ENCODE measurements at regions of chr3 and their contacts with region 1.

Region 1: DNA sequence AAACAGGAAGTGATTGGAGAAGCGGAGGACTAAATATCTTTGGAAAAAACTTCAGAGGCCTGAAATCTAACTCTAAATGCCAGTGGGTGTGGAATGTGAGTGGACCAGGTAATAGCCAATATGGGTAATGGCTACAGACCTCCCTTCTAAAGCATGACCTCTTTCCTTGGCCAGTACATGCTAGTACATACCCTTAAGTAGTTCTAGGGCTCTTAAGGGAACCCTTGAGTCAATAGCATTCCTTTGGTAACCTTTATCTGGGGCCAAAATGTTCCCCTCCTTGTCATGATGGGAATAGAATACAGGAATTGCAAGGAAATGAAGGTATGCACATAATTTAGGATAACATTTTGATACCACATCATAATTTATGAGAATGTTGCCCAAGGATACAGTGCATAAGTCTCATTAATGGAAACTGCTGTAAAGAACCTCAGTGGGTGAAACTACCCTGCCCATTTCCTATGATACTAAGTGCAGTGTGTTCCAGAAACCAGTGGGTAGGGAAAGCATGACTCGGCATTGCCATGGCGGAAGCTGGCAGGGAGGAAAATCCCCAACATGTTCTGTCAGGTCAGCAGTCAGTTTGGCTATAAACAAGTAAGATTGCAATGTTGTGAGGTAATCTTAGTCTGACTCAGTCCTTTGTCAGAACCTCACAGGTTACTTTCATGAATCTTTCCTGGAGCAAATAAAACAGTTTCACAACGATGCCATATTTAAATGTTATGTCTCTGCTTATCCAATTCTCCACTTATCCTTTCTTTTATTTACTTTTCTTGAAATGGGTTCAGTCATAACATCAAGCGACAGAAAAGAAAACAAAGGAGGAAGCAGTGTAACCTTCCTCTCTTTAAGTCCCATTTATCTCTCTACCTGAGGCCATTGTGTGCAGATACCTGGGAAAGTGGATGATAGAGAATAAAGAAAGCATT is 23.5 kb upstream of the RAP2B start:
- DNase-seq: peak; percentile 88
- H3K4me3 Mint-ChIP-seq: no peak overlapping the region
- H3K27ac Mint-ChIP-seq: peak overlapping the region; percentile 71
- H3K4me1 Mint-ChIP-seq: peaks cover 24% of the 10 kb centered on the region
- H3K27me3 Mint-ChIP-seq: peaks cover 3% of the 10 kb centered on the region

Region 2: DNA sequence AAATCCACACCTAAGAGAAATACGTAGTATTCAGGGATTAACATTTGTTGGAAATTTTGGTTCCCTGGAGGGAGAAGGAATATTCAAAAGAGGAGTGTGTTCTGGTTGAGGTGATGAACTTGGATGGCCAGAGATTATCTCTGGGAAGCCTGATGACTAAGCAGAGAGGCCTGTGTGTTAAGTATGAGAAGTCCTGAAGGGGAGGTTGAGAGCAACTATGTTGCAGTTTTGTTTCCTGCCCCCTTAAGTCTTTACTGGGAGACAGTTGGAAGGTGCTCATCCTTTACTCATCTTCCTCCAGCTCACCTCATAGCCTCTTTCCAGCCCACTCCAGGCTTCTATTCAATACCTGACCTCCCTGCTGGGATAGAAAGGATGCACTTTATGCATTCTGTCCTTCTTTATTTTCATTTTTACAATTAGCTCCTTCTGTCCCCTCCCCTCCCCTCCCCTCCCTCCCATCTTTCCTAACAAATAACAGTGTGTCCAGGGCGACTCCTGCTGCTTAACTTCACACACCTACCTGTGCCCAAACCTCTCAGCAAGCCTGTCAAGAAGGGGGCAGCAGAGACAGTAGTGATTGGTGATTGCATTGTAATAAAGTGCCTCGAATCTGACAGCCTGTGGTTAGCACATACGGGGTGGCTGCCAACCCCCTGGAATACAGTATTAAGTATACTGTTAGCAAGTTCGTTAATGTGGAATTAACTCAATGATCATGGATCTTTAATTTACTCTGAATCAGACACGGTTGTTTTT is 35.4 kb after region 1 on chr3:
- CTCF ChIA-PET with region 1: no interaction called
- intact Hi-C with region 1: no loop called
- DNase-seq: no peak
- H3K4me3 Mint-ChIP-seq: no peak overlapping the region
- H3K27ac Mint-ChIP-seq: no peak overlapping the region
- H3K4me1 Mint-ChIP-seq: peaks cover 4% of the 10 kb centered on the region
- H3K27me3 Mint-ChIP-seq: no peaks in the 10 kb centered on the region

Region 3: GRCh38 chr3:153221748-153222162 is 83.2 kb after region 1 on chr3:
- CTCF ChIA-PET with region 1: no interaction called
- intact Hi-C with region 1: loop called (anchors 1 kb)
- DNase-seq: peak; percentile 73
- H3K4me3 Mint-ChIP-seq: peak overlapping the region; percentile 66
- H3K27ac Mint-ChIP-seq: peak overlapping the region; percentile 85
- H3K4me1 Mint-ChIP-seq: peaks cover 53% of the 10 kb centered on the region
- H3K27me3 Mint-ChIP-seq: no peaks in the 10 kb centered on the region

Region 4: GRCh38 chr3:153673853-153674252 is 535.3 kb after region 1 on chr3:
- CTCF ChIA-PET with region 1: no interaction called
- intact Hi-C with region 1: loop called (anchors 1 kb)
- DNase-seq: no peak
- H3K4me3 Mint-ChIP-seq: no peak overlapping the region
- H3K27ac Mint-ChIP-seq: peak overlapping the region; percentile 48
- H3K4me1 Mint-ChIP-seq: peaks cover 11% of the 10 kb centered on the region
- H3K27me3 Mint-ChIP-seq: no peaks in the 10 kb centered on the region

Region 5: DNA sequence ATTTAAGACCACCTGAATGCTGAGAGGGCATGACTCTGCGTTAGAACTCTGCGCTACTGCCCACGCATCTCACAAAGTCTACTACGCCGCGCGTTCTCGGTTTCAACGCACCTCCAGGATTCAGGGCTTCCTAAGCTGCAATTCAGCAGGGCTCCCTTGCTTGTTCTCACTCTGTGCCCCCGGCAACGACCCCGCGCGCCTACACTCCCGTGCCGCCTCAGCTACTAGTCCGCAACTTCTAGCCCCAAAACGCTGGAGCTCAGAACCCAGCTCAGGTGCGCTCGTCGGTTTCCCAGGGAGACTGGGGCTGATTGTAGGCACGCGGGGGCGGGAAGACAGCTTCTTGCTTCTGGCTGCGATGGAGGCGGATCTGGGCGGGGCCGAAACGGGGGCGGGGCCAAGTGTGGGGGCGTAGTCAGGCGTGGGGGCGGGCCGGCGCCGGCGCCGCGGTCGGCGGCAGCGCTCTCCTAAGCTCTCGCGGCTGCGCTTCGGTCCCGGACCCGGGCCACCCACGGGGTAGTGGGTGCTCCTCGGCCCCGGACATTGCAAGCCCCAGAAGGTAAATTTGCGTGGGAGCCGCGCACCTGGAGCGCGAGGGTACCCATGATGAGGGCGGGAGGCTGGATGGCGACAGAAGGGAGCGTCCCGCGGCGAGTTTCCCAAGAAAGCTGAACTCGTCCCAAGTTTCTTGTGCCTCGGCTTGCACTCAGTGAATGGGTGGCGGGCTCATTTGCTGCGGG is 982.6 kb after region 1 on chr3 and contains the start of gene ARHGEF26:
- CTCF ChIA-PET with region 1: no interaction called
- intact Hi-C with region 1: loop called (anchors 5 kb)
- DNase-seq: peak; percentile 89
- H3K4me3 Mint-ChIP-seq: peak within 1 kb of the TSS; percentile 79
- H3K27ac Mint-ChIP-seq: no peak within 1 kb of the TSS
- H3K4me1 Mint-ChIP-seq: peaks cover 12% of the 10 kb centered on the region
- H3K27me3 Mint-ChIP-seq: peaks cover 58% of the 10 kb centered on the region
- total RNA-seq, gene ARHGEF26: 0.25 to 0.45 TPM

Measured in activated naive CD4-positive, alpha-beta T cell treated with anti-CD3 and anti-CD28 coated beads for 36 hours (primary cell).